CD8-positive, alpha-beta T cell (primary cell): ENCODE measurements at regions of chr1 and their contacts with region 1.

Region 1: DNA sequence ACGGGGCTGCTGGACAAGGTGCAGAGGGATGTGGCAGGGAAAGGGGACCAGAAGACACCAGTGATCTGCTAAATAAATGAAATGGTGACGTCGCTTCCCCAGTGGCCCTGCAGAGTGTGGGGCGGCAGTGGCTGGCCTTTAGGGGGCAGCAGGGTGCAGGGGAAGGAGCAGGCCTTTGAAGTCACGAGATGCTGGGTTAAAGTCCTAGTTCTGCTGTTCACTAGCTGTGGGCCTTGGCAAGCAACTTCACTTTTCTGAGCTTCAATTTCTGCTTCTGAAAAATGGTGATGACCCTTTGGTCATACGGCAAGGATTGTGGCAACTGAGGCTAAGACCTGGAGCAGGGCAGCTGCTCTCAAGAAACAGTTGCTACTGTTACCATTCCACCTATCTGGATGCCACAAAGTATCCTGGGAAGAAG is 9.2 kb upstream of the GALE start:
- DNase-seq: peak; percentile 71 to 89 (median 83)
- ATAC-seq: peak; percentile 95
- H3K4me3 ChIP-seq: no peak overlapping the region
- H3K4me3 Mint-ChIP-seq: no peak overlapping the region
- H3K27ac ChIP-seq: no peak overlapping the region
- H3K27ac Mint-ChIP-seq: peak overlapping the region; percentile 22
- H3K4me1 ChIP-seq: peaks cover 6% of the 10 kb centered on the region
- H3K4me1 Mint-ChIP-seq: peaks cover 10% of the 10 kb centered on the region
- H3K27me3 ChIP-seq: no peaks in the 10 kb centered on the region
- H3K27me3 Mint-ChIP-seq: no peaks in the 10 kb centered on the region
- CTCF ChIP-seq: peak; percentile 79

Region 2: DNA sequence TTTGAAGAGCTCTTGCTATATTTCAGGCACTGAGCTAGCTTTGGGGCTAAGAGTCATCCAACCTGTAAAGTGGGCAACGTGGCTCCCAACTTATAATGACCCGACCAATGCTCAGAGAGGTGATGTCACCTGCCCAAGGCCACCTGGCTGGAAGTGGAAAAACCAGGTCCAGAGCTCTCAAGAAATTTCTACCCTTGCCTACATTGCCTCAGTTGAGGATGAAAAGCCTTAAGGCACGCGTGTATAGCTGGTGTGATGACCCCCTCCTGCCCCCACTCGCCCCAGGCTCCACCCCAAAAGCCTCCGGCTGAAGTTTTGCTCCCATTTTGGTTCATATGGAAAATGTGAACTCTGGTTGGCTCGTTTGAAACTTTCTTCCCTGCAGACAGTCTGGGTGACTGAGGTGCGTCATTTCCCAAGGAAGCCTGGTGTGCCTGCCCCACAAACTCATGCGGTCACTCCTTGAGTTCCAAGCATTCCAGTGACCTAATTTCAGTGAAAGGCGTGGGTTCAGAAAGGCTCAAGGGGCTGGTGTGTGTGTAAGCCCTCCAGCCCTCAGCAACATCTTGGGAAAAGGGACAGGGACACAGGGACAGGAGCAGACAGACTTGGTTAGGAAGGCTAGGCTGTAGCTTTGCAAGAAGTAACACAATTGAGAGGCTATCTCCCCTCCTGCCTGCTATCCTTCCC is 613.0 kb before region 1 on chr1:
- CTCF ChIA-PET with region 1: no interaction called
- POLR2A ChIA-PET with region 1: no interaction called
- intact Hi-C with region 1: no loop called
- DNase-seq: no peak
- ATAC-seq: no peak
- H3K4me3 ChIP-seq: no peak overlapping the region
- H3K4me3 Mint-ChIP-seq: no peak overlapping the region
- H3K27ac ChIP-seq: no peak overlapping the region
- H3K27ac Mint-ChIP-seq: no peak overlapping the region
- H3K4me1 ChIP-seq: no peaks in the 10 kb centered on the region
- H3K4me1 Mint-ChIP-seq: no peaks in the 10 kb centered on the region
- H3K27me3 ChIP-seq: no peaks in the 10 kb centered on the region
- H3K27me3 Mint-ChIP-seq: peaks cover 29% of the 10 kb centered on the region
- CTCF ChIP-seq: no peak

Region 3: GRCh38 chr1:23772049-23772853 is 37.5 kb before region 1 on chr1:
- CTCF ChIA-PET with region 1: interaction called, 21 read pairs
- POLR2A ChIA-PET with region 1: interaction called, 4 read pairs
- intact Hi-C with region 1: no loop called
- DNase-seq: peak; percentile 73 to 89 (median 85)
- ATAC-seq: peak; percentile 99
- H3K4me3 ChIP-seq: no peak overlapping the region
- H3K4me3 Mint-ChIP-seq: no peak overlapping the region
- H3K27ac ChIP-seq: no peak overlapping the region
- H3K27ac Mint-ChIP-seq: no peak overlapping the region
- H3K4me1 ChIP-seq: peaks cover 2% of the 10 kb centered on the region
- H3K4me1 Mint-ChIP-seq: peaks cover 27% of the 10 kb centered on the region
- H3K27me3 ChIP-seq: no peaks in the 10 kb centered on the region
- H3K27me3 Mint-ChIP-seq: no peaks in the 10 kb centered on the region
- CTCF ChIP-seq: peak; percentile 94

Region 4: DNA sequence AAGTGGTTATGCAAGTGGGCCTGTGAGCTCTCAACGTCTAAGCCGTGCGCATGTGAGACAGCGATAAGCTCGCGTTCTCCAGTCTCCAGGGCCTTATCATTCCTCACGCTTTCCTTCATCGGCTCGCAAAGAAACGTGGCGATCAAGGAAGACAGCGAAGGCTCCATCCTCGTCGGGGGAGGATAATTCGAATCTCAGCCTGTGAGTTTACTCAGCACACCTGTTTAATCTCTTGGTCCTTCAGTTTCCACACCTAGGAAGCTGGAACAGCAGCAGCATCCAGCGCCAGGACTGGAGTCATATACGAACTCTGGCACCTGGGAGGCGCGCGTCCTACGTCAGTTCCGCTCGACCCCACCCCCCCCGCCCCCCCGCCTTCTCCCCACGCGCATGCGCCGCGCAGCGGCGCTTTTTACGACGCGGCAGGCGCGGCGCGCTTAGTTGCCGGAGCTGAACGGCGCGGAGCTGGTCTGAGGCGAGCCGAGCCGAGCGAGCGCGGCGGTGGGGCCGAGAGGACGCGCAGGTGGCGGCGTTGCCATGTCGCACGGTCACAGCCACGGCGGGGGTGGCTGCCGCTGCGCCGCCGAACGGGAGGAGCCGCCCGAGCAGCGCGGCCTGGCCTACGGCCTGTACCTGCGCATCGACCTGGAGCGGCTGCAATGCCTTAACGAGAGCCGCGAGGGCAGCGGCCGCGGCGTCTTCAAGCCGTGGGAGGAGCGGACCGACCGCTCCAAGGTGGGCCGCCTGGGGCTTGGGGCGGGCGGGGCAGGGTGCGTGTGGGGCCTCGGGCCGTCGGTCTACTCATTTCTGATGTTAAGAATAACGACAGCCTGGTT is 31.6 kb before region 1 on chr1 and contains the start of gene PITHD1:
- CTCF ChIA-PET with region 1: interaction called, 21 read pairs
- POLR2A ChIA-PET with region 1: interaction called, 7 read pairs
- intact Hi-C with region 1: no loop called
- DNase-seq: peak; percentile 59 to 91 (median 78)
- ATAC-seq: peak; percentile 81
- H3K4me3 ChIP-seq: peak within 1 kb of the TSS; percentile 88 to 99
- H3K4me3 Mint-ChIP-seq: peak within 1 kb of the TSS; percentile 94
- H3K27ac ChIP-seq: peak within 1 kb of the TSS; percentile 87 to 95
- H3K27ac Mint-ChIP-seq: peak within 1 kb of the TSS; percentile 97
- H3K4me1 ChIP-seq: peaks cover 25% of the 10 kb centered on the region
- H3K4me1 Mint-ChIP-seq: peaks cover 54% of the 10 kb centered on the region
- H3K27me3 ChIP-seq: no peaks in the 10 kb centered on the region
- H3K27me3 Mint-ChIP-seq: no peaks in the 10 kb centered on the region
- CTCF ChIP-seq: no peak
- total RNA-seq, gene PITHD1: 112 to 117 TPM

Region 5: GRCh38 chr1:23825076-23825761 is 15.5 kb after region 1 on chr1 and contains the start of gene HMGCL:
- CTCF ChIA-PET with region 1: interaction called, 57 read pairs
- POLR2A ChIA-PET with region 1: interaction called, 6 read pairs
- intact Hi-C with region 1: loop called in 1 of 2 experiments (anchors 2 kb)
- DNase-seq: peak; percentile 70 to 95 (median 89)
- ATAC-seq: peak; percentile 98
- H3K4me3 ChIP-seq: peak within 1 kb of the TSS; percentile 96 to 97
- H3K4me3 Mint-ChIP-seq: peak within 1 kb of the TSS; percentile 93
- H3K27ac ChIP-seq: peak within 1 kb of the TSS; percentile 91 to 94
- H3K27ac Mint-ChIP-seq: peak within 1 kb of the TSS; percentile 96
- H3K4me1 ChIP-seq: peaks cover 10% of the 10 kb centered on the region
- H3K4me1 Mint-ChIP-seq: peaks cover 28% of the 10 kb centered on the region
- H3K27me3 ChIP-seq: no peaks in the 10 kb centered on the region
- H3K27me3 Mint-ChIP-seq: no peaks in the 10 kb centered on the region
- CTCF ChIP-seq: no peak
- total RNA-seq, gene HMGCL: 9.2 to 10.2 TPM

Region 6: GRCh38 chr1:23916209-23917131 is 106.7 kb after region 1 on chr1:
- CTCF ChIA-PET with region 1: interaction called, 42 read pairs
- POLR2A ChIA-PET with region 1: no interaction called
- intact Hi-C with region 1: loop called (anchors 1 kb)
- DNase-seq: peak; percentile 36 to 86 (median 63)
- ATAC-seq: peak; percentile 98
- H3K4me3 ChIP-seq: no peak overlapping the region
- H3K4me3 Mint-ChIP-seq: no peak overlapping the region
- H3K27ac ChIP-seq: no peak overlapping the region
- H3K27ac Mint-ChIP-seq: no peak overlapping the region
- H3K4me1 ChIP-seq: peaks cover 35% of the 10 kb centered on the region
- H3K4me1 Mint-ChIP-seq: peaks cover 36% of the 10 kb centered on the region
- H3K27me3 ChIP-seq: no peaks in the 10 kb centered on the region
- H3K27me3 Mint-ChIP-seq: no peaks in the 10 kb centered on the region
- CTCF ChIP-seq: peak; percentile 86

Region 7: GRCh38 chr1:24027838-24028468 is 218.2 kb after region 1 on chr1:
- CTCF ChIA-PET with region 1: interaction called, 3 read pairs
- POLR2A ChIA-PET with region 1: no interaction called
- intact Hi-C with region 1: loop called in 1 of 2 experiments (anchors 2 kb)
- DNase-seq: peak in 2 of 9 experiments; percentile 26 to 47
- ATAC-seq: no peak
- H3K4me3 ChIP-seq: no peak overlapping the region
- H3K4me3 Mint-ChIP-seq: no peak overlapping the region
- H3K27ac ChIP-seq: no peak overlapping the region
- H3K27ac Mint-ChIP-seq: no peak overlapping the region
- H3K4me1 ChIP-seq: no peaks in the 10 kb centered on the region
- H3K4me1 Mint-ChIP-seq: peaks cover 2% of the 10 kb centered on the region
- H3K27me3 ChIP-seq: no peaks in the 10 kb centered on the region
- H3K27me3 Mint-ChIP-seq: no peaks in the 10 kb centered on the region
- CTCF ChIP-seq: peak; percentile 27